ENCODE measurements at regions of chr12 and their contacts with region 1.

Region 1: GRCh38 chr12:42129595-42130204 is 15.0 kb downstream of the GXYLT1 start:
- DNase-seq: peak in 1 of 5 donors; percentile 34
- H3K4me3 ChIP-seq: no peak overlapping the region
- H3K27ac ChIP-seq: no peak overlapping the region
- H3K4me1 ChIP-seq: peaks cover 1% of the 10 kb centered on the region
- H3K27me3 ChIP-seq: no peaks in the 10 kb centered on the region
- CTCF ChIP-seq: peak; percentile 70 to 77 (median 77)
- EP300 ChIP-seq: no peak
- POLR2A ChIP-seq: no peak

Region 2: DNA sequence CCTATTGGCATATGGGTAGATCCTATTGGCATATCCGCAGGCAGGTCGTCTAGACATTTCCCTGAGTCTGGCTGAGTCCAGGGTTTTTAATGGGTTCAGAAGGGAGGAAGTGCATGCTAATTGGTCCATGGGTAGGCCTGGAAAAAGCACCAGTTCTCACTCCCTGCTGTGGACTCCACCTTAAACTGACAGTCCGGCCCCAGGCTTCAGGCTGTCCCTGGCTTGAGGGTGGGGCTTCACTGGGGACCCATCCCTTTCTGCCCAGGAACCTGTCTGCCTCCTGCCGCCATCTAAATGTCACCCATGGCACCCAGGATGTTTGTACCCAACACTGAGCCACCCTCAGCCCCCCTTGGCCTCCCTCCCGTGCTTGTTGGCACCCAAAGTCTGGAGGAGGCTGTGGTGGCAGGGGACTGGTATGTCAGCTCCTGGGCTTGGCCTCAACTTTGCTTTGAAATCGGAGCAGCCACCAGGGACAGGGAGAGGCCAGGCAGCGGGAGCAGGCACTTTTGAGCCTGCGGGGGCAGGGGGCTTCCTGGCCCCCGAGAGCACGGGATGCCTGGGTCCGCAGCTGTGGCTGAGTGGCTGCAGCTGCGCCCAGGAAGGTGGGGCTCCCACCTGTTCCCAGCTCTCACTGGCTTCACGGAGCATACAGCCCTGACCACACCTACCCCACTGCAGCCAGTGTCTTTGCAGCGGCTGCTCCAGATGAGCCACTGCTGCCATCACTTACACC is 137.9 kb after region 1 on chr12:
- intact Hi-C with region 1: no loop called
- DNase-seq: no peak
- H3K4me3 ChIP-seq: no peak overlapping the region
- H3K27ac ChIP-seq: no peak overlapping the region
- H3K4me1 ChIP-seq: no peaks in the 10 kb centered on the region
- H3K27me3 ChIP-seq: no peaks in the 10 kb centered on the region
- CTCF ChIP-seq: no peak
- EP300 ChIP-seq: no peak
- POLR2A ChIP-seq: no peak

Region 3: GRCh38 chr12:42332301-42333285 is 202.9 kb after region 1 on chr12:
- intact Hi-C with region 1: loop called in 2 of 4 experiments (anchors 5 kb)
- DNase-seq: peak in 1 of 5 donors; percentile 26
- H3K4me3 ChIP-seq: no peak overlapping the region
- H3K27ac ChIP-seq: no peak overlapping the region
- H3K4me1 ChIP-seq: peaks cover 1% of the 10 kb centered on the region
- H3K27me3 ChIP-seq: no peaks in the 10 kb centered on the region
- CTCF ChIP-seq: peak; percentile 42 to 70 (median 52)
- EP300 ChIP-seq: no peak
- POLR2A ChIP-seq: no peak

Measured in ovary (tissue), 10 donors.